Mammary epithelial cell (primary cell): ENCODE measurements at regions of chr2 and their contacts with region 1.

Region 1: GRCh38 chr2:148006249-148007007 is 14.1 kb downstream of the ORC4 start:
- DNase-seq: no peak
- H3K4me3 ChIP-seq: no peak overlapping the region
- H3K27ac ChIP-seq: no peak overlapping the region
- H3K4me1 ChIP-seq: no peaks in the 10 kb centered on the region
- H3K27me3 ChIP-seq: no peaks in the 10 kb centered on the region
- CTCF ChIP-seq: no peak

Region 2: GRCh38 chr2:148493822-148494563 is 487.6 kb after region 1 on chr2:
- CTCF ChIA-PET with region 1: interaction called, 23 read pairs
- dilution Hi-C with region 1: no loop called
- in situ Hi-C with region 1: no loop called
- intact Hi-C with region 1: no loop called
- DNase-seq: no peak
- H3K4me3 ChIP-seq: no peak overlapping the region
- H3K27ac ChIP-seq: no peak overlapping the region
- H3K4me1 ChIP-seq: no peaks in the 10 kb centered on the region
- H3K27me3 ChIP-seq: no peaks in the 10 kb centered on the region
- CTCF ChIP-seq: no peak